Gastrocnemius medialis (tissue), 4 donors: ENCODE measurements at regions of chr16 and their contacts with region 1.

Region 1: DNA sequence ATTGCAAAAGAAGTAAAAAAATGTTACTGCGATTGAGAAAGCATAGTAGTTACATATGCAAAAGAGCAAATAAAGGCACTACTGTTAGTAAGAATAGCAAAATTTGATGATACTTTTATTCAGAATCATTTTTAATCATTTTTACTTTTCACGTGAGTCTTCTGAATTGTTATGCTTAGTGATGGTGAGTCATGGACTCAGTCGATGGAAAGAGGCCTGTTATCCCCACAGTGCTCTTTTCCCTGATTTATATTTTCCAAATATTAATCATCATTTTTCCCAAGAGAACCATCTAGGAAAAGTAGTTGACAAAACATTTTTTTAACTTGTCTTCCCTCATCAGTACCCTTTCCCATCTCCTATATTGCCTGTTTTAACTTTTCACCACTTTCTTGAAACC is 181.1 kb downstream of the CHD9 start:
- DNase-seq: no peak
- ATAC-seq: no peak
- H3K4me3 ChIP-seq: no peak overlapping the region
- H3K27ac ChIP-seq: no peak overlapping the region
- H3K4me1 ChIP-seq: no peaks in the 10 kb centered on the region
- H3K27me3 ChIP-seq: no peaks in the 10 kb centered on the region
- CTCF ChIP-seq: no peak
- POLR2A ChIP-seq: no peak

Region 2: GRCh38 chr16:52283018-52283417 is 952.8 kb before region 1 on chr16:
- in situ Hi-C with region 1: no loop called
- intact Hi-C with region 1: no loop called
- DNase-seq: no peak
- ATAC-seq: no peak
- H3K4me3 ChIP-seq: no peak overlapping the region
- H3K27ac ChIP-seq: no peak overlapping the region
- H3K4me1 ChIP-seq: no peaks in the 10 kb centered on the region
- H3K27me3 ChIP-seq: no peaks in the 10 kb centered on the region
- CTCF ChIP-seq: no peak
- POLR2A ChIP-seq: no peak

Region 3: GRCh38 chr16:53031323-53031942 is 204.4 kb before region 1 on chr16:
- in situ Hi-C with region 1: no loop called
- intact Hi-C with region 1: no loop called
- DNase-seq: no peak
- ATAC-seq: no peak
- H3K4me3 ChIP-seq: no peak overlapping the region
- H3K27ac ChIP-seq: no peak overlapping the region
- H3K4me1 ChIP-seq: no peaks in the 10 kb centered on the region
- H3K27me3 ChIP-seq: no peaks in the 10 kb centered on the region
- CTCF ChIP-seq: no peak
- POLR2A ChIP-seq: no peak

Region 4: GRCh38 chr16:53198933-53199332 is 36.9 kb before region 1 on chr16:
- in situ Hi-C with region 1: no loop called
- intact Hi-C with region 1: no loop called
- DNase-seq: no peak
- ATAC-seq: no peak
- H3K4me3 ChIP-seq: no peak overlapping the region
- H3K27ac ChIP-seq: no peak overlapping the region
- H3K4me1 ChIP-seq: peaks cover 12 to 13% of the 10 kb centered on the region in 2 donors
- H3K27me3 ChIP-seq: no peaks in the 10 kb centered on the region
- CTCF ChIP-seq: no peak
- POLR2A ChIP-seq: no peak

Region 5: DNA sequence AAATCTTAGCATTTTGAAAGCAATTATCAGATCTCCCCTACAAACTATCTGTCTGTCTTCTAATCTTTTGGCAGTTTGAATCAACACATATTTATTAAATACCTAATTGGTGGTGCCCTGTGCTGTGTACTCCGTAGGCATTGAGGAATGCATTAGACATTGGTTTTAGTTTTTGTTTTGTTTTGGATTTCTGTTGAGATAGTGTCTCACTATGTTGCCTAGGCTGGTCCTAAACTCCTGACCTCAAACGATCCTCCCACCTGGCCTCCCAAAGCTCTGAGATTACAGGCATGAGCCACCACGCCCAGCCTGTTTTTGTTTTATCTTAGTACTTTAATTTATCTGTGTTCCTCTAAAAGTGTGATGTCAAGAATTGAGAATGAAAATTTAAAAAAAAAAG is 73.6 kb after region 1 on chr16:
- in situ Hi-C with region 1: no loop called
- intact Hi-C with region 1: loop called (anchors 10 kb)
- DNase-seq: no peak
- ATAC-seq: no peak
- H3K4me3 ChIP-seq: no peak overlapping the region
- H3K27ac ChIP-seq: no peak overlapping the region
- H3K4me1 ChIP-seq: peaks cover 0 to 6% of the 10 kb centered on the region in 2 donors
- H3K27me3 ChIP-seq: no peaks in the 10 kb centered on the region
- CTCF ChIP-seq: no peak
- POLR2A ChIP-seq: no peak